ENCODE measurements at regions of chr19 and their contacts with region 1.

Region 1: GRCh38 chr19:45323671-45324081 is 1.0 kb upstream of the CKM start:
- DNase-seq: peak; percentile 72 to 96
- ATAC-seq: peak; percentile 30 to 45
- H3K4me3 ChIP-seq: peak overlapping the region; percentile 45 to 76 (median 58)
- H3K27ac ChIP-seq: peak overlapping the region; percentile 97 to 100 (median 100)
- H3K4me1 ChIP-seq: peaks cover 49 to 67% of the 10 kb centered on the region in 2 donors
- H3K27me3 ChIP-seq: no peaks in the 10 kb centered on the region
- CTCF ChIP-seq: no peak
- POLR2A ChIP-seq: peak; percentile 94 to 95

Region 2: DNA sequence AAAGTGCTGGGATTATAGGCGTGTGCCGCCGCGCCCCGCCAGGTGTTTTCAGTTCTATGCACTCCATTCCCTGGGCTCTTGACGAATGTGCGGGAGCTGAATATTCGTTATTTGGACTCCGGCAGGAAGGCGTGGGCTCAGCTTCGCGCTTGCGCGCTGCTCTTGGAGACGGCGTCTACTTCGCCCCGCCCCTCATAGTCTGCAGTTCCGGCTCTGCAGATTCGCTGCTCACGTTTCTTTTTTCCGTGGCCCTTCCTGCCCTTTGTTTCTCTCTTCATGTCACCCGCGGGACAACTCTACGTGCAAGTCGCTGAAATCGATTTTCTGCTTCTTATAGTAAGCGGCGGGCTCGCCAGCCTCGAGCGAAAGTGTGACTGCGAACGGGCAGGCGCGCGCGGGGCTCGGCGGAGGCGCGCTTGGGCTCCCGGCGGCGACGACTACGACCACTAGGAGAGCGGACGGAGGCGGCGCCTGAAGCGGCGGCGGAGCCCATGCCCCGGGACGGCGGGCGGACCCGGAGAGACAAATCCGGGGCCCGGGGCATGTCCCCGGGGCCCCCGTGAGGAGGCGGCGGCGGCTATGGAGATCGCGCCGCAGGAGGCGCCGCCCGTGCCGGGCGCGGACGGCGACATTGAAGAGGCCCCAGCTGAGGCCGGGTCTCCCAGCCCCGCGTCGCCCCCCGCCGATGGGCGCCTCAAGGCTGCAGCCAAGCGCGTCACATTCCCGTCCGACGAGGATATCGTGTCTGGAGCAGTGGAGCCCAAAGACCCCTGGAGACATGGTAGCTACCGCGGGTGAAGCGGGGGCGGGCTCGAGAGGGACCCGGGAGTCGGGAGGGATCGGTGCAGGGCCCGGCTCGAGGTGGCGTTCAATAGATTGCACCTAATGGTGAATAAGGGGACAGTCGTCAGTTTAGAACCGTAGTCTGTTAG is 230.7 kb before region 1 on chr19 and contains the start of gene PPP1R37:
- in situ Hi-C with region 1: no loop called
- intact Hi-C with region 1: loop called (anchors 10 kb)
- DNase-seq: peak; percentile 91 to 93
- ATAC-seq: peak; percentile 88 to 92
- H3K4me3 ChIP-seq: peak within 1 kb of the TSS; percentile 71 to 98 (median 84)
- H3K27ac ChIP-seq: peak within 1 kb of the TSS; percentile 90 to 96 (median 90)
- H3K4me1 ChIP-seq: peaks cover 53 to 55% of the 10 kb centered on the region in 2 donors
- H3K27me3 ChIP-seq: no peaks in the 10 kb centered on the region
- CTCF ChIP-seq: peak; percentile 46 to 70 (median 59)
- POLR2A ChIP-seq: peak; percentile 65 to 71
- total RNA-seq, gene PPP1R37: 30.5 to 51.1 (median 39.7) TPM

Region 3: GRCh38 chr19:45276284-45276687 is 47.4 kb before region 1 on chr19:
- in situ Hi-C with region 1: no loop called
- intact Hi-C with region 1: no loop called
- DNase-seq: no peak
- ATAC-seq: no peak
- H3K4me3 ChIP-seq: no peak overlapping the region
- H3K27ac ChIP-seq: no peak overlapping the region
- H3K4me1 ChIP-seq: no peaks in the 10 kb centered on the region
- H3K27me3 ChIP-seq: no peaks in the 10 kb centered on the region
- CTCF ChIP-seq: no peak
- POLR2A ChIP-seq: no peak

Region 4: GRCh38 chr19:45370410-45371204 is 46.9 kb after region 1 on chr19 and contains the start of gene ERCC2:
- in situ Hi-C with region 1: no loop called
- intact Hi-C with region 1: no loop called
- DNase-seq: peak; percentile 98 to 99
- ATAC-seq: peak; percentile 100
- H3K4me3 ChIP-seq: peak within 1 kb of the TSS; percentile 74 to 98 (median 94)
- H3K27ac ChIP-seq: peak within 1 kb of the TSS; percentile 76 to 87 (median 81)
- H3K4me1 ChIP-seq: peaks cover 0 to 15% of the 10 kb centered on the region in 2 donors
- H3K27me3 ChIP-seq: no peaks in the 10 kb centered on the region
- CTCF ChIP-seq: no peak
- POLR2A ChIP-seq: no peak
- total RNA-seq, gene ERCC2: 4.8 to 8.9 (median 7.2) TPM

Region 5: GRCh38 chr19:45405435-45406225 is 82.0 kb after region 1 on chr19:
- in situ Hi-C with region 1: no loop called
- intact Hi-C with region 1: loop called (anchors 5 kb)
- DNase-seq: peak; percentile 82 to 85
- ATAC-seq: peak; percentile 76 to 78
- H3K4me3 ChIP-seq: peak overlapping the region; percentile 58 to 94 (median 80)
- H3K27ac ChIP-seq: peak overlapping the region; percentile 88 to 96 (median 92)
- H3K4me1 ChIP-seq: peaks cover 22 to 23% of the 10 kb centered on the region in 2 donors
- H3K27me3 ChIP-seq: peaks cover 5 to 10% (median 9%) of the 10 kb centered on the region in 3 donors
- CTCF ChIP-seq: no peak
- POLR2A ChIP-seq: peak in 1 of 2 donors; percentile 22

Region 6: GRCh38 chr19:45496349-45496953 is 172.8 kb after region 1 on chr19:
- in situ Hi-C with region 1: no loop called
- intact Hi-C with region 1: loop called (anchors 10 kb)
- DNase-seq: no peak
- ATAC-seq: peak; percentile 11 to 19
- H3K4me3 ChIP-seq: peak overlapping the region; percentile 75 to 83 (median 80)
- H3K27ac ChIP-seq: peak overlapping the region; percentile 55 to 68 (median 60)
- H3K4me1 ChIP-seq: peaks cover 33 to 35% of the 10 kb centered on the region in 2 donors
- H3K27me3 ChIP-seq: peaks cover 4 to 30% (median 9%) of the 10 kb centered on the region in 3 donors
- CTCF ChIP-seq: peak in 1 of 5 experiments; percentile 10
- POLR2A ChIP-seq: peak in 1 of 2 donors; percentile 17

Region 7: GRCh38 chr19:45779231-45780145 is 455.8 kb after region 1 on chr19:
- in situ Hi-C with region 1: no loop called
- intact Hi-C with region 1: loop called (anchors 10 kb)
- DNase-seq: peak in 1 of 2 donors; percentile 63
- ATAC-seq: no peak
- H3K4me3 ChIP-seq: peak overlapping the region in 1 of 4 donors; percentile 75
- H3K27ac ChIP-seq: peak overlapping the region; percentile 96 to 100 (median 99)
- H3K4me1 ChIP-seq: peaks cover 32 to 52% of the 10 kb centered on the region in 2 donors
- H3K27me3 ChIP-seq: no peaks in the 10 kb centered on the region
- CTCF ChIP-seq: peak in 2 of 5 experiments; percentile 25 to 33
- POLR2A ChIP-seq: no peak